CD8-positive, alpha-beta T cell (primary cell): ENCODE measurements at regions of chr17 and their contacts with region 1.

Region 1: DNA sequence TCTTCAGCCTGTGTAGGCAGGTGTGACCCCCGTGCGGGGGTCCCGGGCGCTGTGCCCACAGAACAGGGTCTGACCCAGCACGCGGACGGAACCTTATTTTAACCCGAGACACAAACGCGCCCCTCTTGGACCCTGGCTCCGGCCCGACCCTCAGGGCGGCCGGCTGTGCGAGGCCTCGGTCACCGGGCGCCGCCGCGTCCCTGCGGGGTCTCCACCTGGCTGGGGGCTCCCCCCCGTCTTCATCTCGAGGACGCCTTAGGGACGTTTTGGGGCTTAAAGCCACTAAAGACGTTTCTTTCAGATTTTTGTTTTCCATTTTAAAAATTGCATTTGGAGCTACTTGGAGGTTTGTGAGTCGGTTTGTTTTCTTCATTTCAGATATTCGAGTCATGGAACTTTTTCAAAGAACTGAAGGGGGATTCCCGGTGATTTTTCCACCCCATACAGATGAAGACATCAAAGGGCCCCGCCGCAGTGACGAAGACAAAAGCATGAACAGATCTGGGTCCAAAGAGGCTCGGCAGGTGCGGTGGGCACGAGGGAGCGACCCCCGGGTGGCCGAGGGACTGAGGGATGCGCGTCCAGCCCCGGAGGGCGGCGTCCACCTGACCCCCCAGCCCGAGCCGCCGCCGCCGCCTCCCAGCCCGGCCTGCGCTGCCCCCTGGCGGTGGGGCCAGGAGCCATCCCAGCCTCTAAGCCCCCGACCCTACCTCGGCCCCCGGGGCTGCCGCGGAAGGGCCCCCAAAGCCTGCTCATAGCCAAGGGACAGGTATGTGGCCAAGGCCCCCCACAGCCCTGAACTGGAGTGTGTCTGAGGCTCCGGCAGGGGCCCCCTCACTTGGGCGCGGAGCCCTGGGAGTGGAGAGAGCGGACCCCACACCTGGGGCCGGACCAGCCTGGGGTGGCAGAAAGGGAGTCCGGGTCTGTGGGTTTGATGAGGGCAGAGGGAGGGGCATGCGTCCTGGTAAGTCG is 3.8 kb upstream of the CD7 start:
- DNase-seq: peak; percentile 46 to 94 (median 84)
- ATAC-seq: peak; percentile 44
- H3K4me3 ChIP-seq: peak overlapping the region; percentile 25 to 56
- H3K4me3 Mint-ChIP-seq: peak overlapping the region; percentile 74
- H3K27ac ChIP-seq: peak overlapping the region in 1 of 2 experiments; percentile 36
- H3K27ac Mint-ChIP-seq: peak overlapping the region; percentile 92
- H3K4me1 ChIP-seq: peaks cover 24% of the 10 kb centered on the region
- H3K4me1 Mint-ChIP-seq: peaks cover 19% of the 10 kb centered on the region
- H3K27me3 ChIP-seq: peaks cover 0 to 5% of the 10 kb centered on the region in 2 experiments
- H3K27me3 Mint-ChIP-seq: no peaks in the 10 kb centered on the region
- CTCF ChIP-seq: peak; percentile 97

Region 2: DNA sequence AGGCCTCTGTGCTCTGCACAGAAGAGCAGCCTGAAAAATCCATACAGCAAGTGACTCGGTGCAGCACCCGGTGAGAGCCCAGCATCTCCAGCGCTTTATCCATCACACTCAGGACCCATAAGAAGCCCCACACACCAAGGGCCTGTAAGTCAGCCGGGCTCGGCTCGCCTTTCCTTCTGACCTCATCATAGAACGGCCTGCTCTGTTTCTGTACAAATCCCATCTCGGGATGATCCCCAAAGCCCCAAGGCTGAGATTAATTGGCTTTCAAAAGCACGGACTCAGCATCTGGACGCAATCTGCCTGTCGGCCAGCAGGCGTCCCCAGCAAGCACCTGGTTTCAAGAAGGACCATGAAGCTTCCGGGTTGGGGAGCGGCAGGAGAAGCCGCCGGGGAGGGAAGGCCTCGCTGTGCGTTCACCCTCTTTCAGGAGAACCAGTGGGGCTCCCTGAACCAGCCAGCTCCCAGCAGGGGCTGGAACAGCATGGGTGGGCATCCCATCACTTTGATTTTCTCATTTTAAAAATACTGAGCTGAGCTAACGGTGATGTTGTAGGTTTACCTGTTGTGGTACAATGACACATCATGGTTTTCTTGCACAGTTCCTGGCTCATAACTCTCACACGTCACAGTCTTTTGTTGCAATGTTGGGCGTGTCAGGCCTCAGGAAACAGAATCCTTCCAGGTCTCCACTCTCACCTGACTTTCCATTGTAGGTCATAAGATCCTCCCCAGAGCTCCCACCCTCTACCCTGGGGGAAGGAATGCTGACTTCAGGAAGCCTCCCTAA is 115.3 kb before region 1 on chr17:
- CTCF ChIA-PET with region 1: interaction called, 9 read pairs
- POLR2A ChIA-PET with region 1: interaction called, 4 read pairs
- intact Hi-C with region 1: loop called in 1 of 2 experiments (anchors 1 kb)
- DNase-seq: peak; percentile 61 to 91 (median 82)
- ATAC-seq: peak; percentile 83
- H3K4me3 ChIP-seq: no peak overlapping the region
- H3K4me3 Mint-ChIP-seq: peak overlapping the region; percentile 60
- H3K27ac ChIP-seq: peak overlapping the region; percentile 56 to 89
- H3K27ac Mint-ChIP-seq: peak overlapping the region; percentile 96
- H3K4me1 ChIP-seq: peaks cover 24% of the 10 kb centered on the region
- H3K4me1 Mint-ChIP-seq: peaks cover 40% of the 10 kb centered on the region
- H3K27me3 ChIP-seq: no peaks in the 10 kb centered on the region
- H3K27me3 Mint-ChIP-seq: no peaks in the 10 kb centered on the region
- CTCF ChIP-seq: peak; percentile 88

Region 3: DNA sequence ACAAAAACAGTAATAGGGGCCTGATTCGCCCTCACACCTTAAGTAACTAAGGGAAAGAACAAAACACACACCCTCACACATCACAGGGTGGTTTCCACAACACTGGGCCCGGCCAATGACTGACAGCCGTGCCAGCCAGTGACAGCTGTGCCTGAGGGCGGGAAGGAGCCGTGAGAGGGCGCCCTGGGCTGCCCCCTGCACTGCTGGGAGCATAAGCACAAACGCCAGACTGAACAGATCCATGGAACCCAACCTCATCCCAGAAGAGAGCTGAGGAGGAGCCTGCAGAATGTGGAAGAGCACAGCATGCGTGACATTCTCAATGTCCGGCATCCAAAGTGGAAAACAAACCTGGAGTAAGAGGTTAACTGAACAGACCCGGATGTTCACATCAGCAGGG is 63.8 kb before region 1 on chr17:
- CTCF ChIA-PET with region 1: interaction called, 4 read pairs
- POLR2A ChIA-PET with region 1: interaction called, 3 read pairs
- intact Hi-C with region 1: loop called in 1 of 2 experiments (anchors 5 kb)
- DNase-seq: peak; percentile 44 to 92 (median 67)
- ATAC-seq: peak; percentile 94
- H3K4me3 ChIP-seq: no peak overlapping the region
- H3K4me3 Mint-ChIP-seq: no peak overlapping the region
- H3K27ac ChIP-seq: peak overlapping the region; percentile 31 to 71
- H3K27ac Mint-ChIP-seq: peak overlapping the region; percentile 91
- H3K4me1 ChIP-seq: peaks cover 5% of the 10 kb centered on the region
- H3K4me1 Mint-ChIP-seq: peaks cover 39% of the 10 kb centered on the region
- H3K27me3 ChIP-seq: no peaks in the 10 kb centered on the region
- H3K27me3 Mint-ChIP-seq: no peaks in the 10 kb centered on the region
- CTCF ChIP-seq: no peak

Region 4: GRCh38 chr17:82302991-82303943 is 18.0 kb before region 1 on chr17:
- CTCF ChIA-PET with region 1: interaction called, 150 read pairs
- POLR2A ChIA-PET with region 1: interaction called, 80 read pairs
- intact Hi-C with region 1: loop called (anchors 1 kb)
- DNase-seq: peak in 7 of 9 experiments; percentile 38 to 78 (median 53)
- ATAC-seq: peak; percentile 33
- H3K4me3 ChIP-seq: peak overlapping the region; percentile 34 to 59
- H3K4me3 Mint-ChIP-seq: peak overlapping the region; percentile 83
- H3K27ac ChIP-seq: peak overlapping the region; percentile 45 to 55
- H3K27ac Mint-ChIP-seq: peak overlapping the region; percentile 100
- H3K4me1 ChIP-seq: peaks cover 88% of the 10 kb centered on the region
- H3K4me1 Mint-ChIP-seq: peaks cover 82% of the 10 kb centered on the region
- H3K27me3 ChIP-seq: no peaks in the 10 kb centered on the region
- H3K27me3 Mint-ChIP-seq: no peaks in the 10 kb centered on the region
- CTCF ChIP-seq: no peak